ENCODE measurements at regions of chr3 and their contacts with region 1.

Region 1: GRCh38 chr3:127590593-127591477 is at the start of gene TPRA1:
- DNase-seq: peak; percentile 99
- H3K4me3 Mint-ChIP-seq: peak within 1 kb of the TSS; percentile 77
- H3K27ac Mint-ChIP-seq: peak within 1 kb of the TSS; percentile 98
- H3K4me1 Mint-ChIP-seq: peaks cover 18% of the 10 kb centered on the region
- H3K27me3 Mint-ChIP-seq: no peaks in the 10 kb centered on the region
- CTCF ChIP-seq: peak; percentile 20
- total RNA-seq, gene TPRA1: 47.0 and 57.2 TPM in 2 replicates

Region 2: DNA sequence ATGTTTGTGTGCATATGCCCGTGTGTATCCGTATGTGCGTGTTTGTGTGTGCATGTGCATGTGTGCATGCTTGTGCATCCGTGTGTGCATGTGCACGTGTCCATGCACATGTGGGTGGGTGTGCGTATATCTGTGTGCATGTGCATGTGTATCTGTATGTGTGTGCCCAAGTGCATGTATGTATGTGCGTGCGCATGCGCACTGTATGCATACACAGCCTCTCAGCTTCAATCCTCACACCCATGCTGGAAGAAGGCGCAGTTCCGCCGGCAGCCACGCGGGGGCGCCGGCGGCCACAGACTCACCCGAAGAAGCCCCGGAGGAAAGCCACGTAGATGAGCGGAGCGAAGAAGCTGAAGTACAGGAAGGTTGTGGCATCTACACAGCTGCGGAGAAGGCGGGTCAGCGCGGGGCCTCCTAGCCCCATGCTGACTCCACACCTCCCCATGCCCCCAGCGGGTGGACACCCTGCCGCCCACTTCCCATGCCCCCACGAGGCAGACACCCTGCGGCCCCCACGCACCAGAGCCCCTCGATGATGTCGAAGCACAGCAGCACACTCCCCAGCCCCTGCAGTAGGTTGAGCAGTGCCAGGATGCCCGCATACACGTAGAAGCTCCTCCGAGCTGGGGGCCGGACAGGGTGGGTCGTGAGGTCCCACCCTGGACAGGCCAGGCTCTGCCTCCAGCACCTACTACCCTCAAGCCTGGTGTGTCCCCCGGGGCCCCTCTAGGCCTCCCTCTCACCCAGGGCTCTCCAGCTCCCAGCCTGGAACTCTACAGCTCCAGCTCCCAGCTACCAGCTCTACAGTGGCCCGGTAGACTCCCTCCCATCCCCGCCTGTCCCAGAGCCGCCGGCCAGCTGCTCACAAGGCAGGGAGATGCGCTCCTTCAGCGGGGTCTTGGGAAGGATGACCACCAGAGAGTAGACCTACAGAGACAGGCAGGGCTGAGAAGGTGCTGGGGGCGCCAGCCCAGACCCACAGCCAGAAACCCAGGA is 15.7 kb before region 1 on chr3:
- CTCF ChIA-PET with region 1: interaction called, 43 read pairs
- POLR2A ChIA-PET with region 1: interaction called, 18 read pairs
- intact Hi-C with region 1: loop called (anchors 1 kb)
- DNase-seq: peak; percentile 91
- H3K4me3 Mint-ChIP-seq: no peak overlapping the region
- H3K27ac Mint-ChIP-seq: peak overlapping the region; percentile 23
- H3K4me1 Mint-ChIP-seq: peaks cover 6% of the 10 kb centered on the region
- H3K27me3 Mint-ChIP-seq: no peaks in the 10 kb centered on the region
- CTCF ChIP-seq: peak; percentile 96

Region 3: DNA sequence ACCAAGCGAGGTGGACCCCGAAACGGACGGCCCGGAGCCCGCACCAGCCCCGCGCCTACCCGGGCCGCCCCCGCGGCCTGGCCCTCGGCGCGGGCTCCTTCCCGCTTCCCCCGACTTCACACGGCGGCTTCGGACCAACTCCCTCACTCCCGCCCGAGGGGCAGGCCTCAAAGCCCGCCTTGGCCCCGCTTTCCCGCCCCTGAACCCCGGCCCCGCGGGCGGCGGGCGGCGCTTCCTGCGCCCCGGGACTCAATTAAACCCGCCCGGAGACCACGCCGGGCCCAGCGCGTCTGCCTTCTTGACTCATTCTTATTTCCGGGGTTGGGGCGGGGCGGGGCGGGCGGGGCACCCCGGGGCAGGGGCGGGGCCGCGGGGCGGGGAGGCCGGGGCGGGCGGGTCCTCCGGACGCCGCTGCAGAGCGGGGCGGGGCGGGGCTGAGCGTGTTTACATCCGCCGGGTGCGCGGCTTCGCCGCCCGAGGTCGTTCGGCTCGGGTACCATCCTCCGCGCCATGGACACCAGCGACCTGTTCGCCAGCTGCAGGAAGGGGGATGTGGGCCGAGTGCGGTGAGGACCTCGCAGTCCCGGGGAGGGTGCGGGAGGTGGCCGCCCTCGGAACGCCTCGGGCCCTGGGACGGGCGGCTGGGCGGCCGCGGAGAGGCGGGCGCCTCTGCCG is 81.8 kb after region 1 on chr3 and contains the start of gene ABTB1:
- CTCF ChIA-PET with region 1: interaction called, 3 read pairs
- POLR2A ChIA-PET with region 1: interaction called, 10 read pairs
- intact Hi-C with region 1: no loop called
- DNase-seq: peak; percentile 75
- H3K4me3 Mint-ChIP-seq: peak within 1 kb of the TSS; percentile 79
- H3K27ac Mint-ChIP-seq: peak within 1 kb of the TSS; percentile 93
- H3K4me1 Mint-ChIP-seq: peaks cover 19% of the 10 kb centered on the region
- H3K27me3 Mint-ChIP-seq: no peaks in the 10 kb centered on the region
- CTCF ChIP-seq: no peak
- total RNA-seq, gene ABTB1: 9.7 and 10.0 TPM in 2 replicates

Region 4: DNA sequence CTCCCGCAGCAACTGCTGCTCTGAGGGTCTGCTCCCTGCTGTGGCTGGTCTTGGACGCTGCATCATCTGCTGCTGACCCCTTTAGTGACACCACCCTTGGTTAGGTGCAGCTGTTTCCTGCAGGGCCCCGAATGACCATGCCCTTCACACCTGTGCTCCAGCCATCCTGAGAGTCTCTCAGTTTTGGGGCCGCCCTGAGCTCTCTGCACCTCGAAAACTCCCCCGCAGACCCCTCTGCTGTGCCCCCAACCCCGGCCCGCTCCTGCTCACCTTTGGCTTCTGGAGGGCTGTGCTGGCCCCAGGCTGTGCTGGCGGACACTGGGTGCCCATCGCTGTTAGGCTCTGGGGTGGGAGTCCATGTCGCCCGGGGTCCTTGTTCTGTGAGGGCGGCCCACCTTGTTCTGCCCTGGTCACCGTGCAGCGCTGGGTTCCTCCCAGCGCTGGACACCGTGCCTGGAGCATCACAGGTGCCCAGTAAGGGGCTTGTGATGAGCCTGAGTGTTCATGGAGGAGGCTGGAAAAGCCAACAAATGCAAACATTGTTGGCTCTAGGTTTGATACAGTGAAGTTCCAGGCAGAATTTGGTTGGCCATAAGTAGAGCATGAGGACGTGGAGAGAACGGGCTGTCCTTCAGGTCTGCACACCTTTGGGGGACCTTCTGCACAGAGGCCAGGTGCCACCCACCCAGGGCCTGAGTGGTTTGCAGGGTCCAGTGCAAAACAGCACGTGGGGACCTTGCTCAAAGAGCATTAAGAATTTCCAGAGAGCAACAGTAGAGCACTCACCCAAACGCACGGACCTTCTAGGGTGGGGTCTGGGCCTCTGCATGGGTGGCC is 94.3 kb after region 1 on chr3:
- CTCF ChIA-PET with region 1: interaction called, 3 read pairs
- POLR2A ChIA-PET with region 1: interaction called, 11 read pairs
- intact Hi-C with region 1: loop called (anchors 5 kb)
- DNase-seq: no peak
- H3K4me3 Mint-ChIP-seq: no peak overlapping the region
- H3K27ac Mint-ChIP-seq: no peak overlapping the region
- H3K4me1 Mint-ChIP-seq: peaks cover 8% of the 10 kb centered on the region
- H3K27me3 Mint-ChIP-seq: no peaks in the 10 kb centered on the region
- CTCF ChIP-seq: no peak

Region 5: GRCh38 chr3:127690823-127691452 is 100.1 kb after region 1 on chr3:
- CTCF ChIA-PET with region 1: interaction called, 3 read pairs
- POLR2A ChIA-PET with region 1: interaction called, 6 read pairs
- intact Hi-C with region 1: loop called (anchors 5 kb)
- DNase-seq: peak; percentile 69
- H3K4me3 Mint-ChIP-seq: no peak overlapping the region
- H3K27ac Mint-ChIP-seq: peak overlapping the region; percentile 46
- H3K4me1 Mint-ChIP-seq: peaks cover 5% of the 10 kb centered on the region
- H3K27me3 Mint-ChIP-seq: no peaks in the 10 kb centered on the region
- CTCF ChIP-seq: peak; percentile 67

Region 6: GRCh38 chr3:127747723-127748521 is 157.1 kb after region 1 on chr3:
- CTCF ChIA-PET with region 1: no interaction called
- POLR2A ChIA-PET with region 1: no interaction called
- intact Hi-C with region 1: loop called (anchors 5 kb)
- DNase-seq: peak; percentile 78
- H3K4me3 Mint-ChIP-seq: peak overlapping the region; percentile 11
- H3K27ac Mint-ChIP-seq: peak overlapping the region; percentile 49
- H3K4me1 Mint-ChIP-seq: peaks cover 46% of the 10 kb centered on the region
- H3K27me3 Mint-ChIP-seq: no peaks in the 10 kb centered on the region
- CTCF ChIP-seq: no peak

Region 7: GRCh38 chr3:127959846-127960245 is 369.0 kb after region 1 on chr3:
- CTCF ChIA-PET with region 1: interaction called, 3 read pairs
- POLR2A ChIA-PET with region 1: interaction called, 4 read pairs
- intact Hi-C with region 1: loop called (anchors 5 kb)
- DNase-seq: peak; percentile 41
- H3K4me3 Mint-ChIP-seq: no peak overlapping the region
- H3K27ac Mint-ChIP-seq: no peak overlapping the region
- H3K4me1 Mint-ChIP-seq: peaks cover 15% of the 10 kb centered on the region
- H3K27me3 Mint-ChIP-seq: no peaks in the 10 kb centered on the region
- CTCF ChIP-seq: no peak